ENCODE measurements at regions of chr10 and their contacts with region 1.

Region 1: DNA sequence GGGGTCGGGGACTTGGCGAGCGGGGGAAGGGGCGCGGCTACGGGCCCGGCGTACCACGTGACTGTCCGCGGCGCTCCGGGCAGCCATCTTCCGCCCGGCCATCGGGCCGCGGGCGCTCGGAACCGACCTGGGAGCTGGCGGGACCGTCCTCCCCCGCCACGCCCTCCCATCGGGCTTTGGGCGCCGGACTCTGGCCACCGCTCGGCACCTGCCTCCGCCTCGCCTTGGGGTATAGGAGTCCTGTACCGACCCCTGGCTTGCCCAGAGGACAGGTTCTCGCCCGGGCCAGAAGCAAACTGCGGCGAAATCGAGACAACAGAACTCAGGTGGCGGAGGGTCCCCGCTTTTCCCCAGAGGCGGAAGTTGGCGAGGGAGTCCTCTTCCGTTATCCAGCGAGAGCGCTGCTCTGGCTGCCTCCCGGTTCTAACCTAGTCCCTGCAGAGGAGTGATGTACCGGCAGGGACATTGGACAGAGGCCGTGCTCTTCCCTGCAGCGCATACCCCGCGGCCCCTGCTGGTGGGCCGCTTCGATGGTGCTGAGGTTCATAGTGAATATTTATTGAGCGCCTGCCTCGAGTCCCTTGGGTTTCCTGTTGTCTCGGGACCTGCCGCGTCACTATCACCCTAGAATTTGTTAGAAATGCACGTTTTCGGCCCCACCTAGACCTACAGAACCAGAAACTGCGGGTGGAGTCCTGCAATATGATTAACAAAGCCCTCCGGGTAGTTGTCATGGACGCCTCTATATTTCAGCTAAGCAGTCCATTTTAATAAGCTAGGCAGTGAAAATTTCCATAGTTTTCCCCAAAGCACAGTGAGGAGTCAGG is 1.3 kb upstream of the SGMS1 start:
- DNase-seq: peak; percentile 64
- ATAC-seq: peak; percentile 66
- H3K4me3 ChIP-seq: peak overlapping the region; percentile 63
- H3K27ac ChIP-seq: peak overlapping the region; percentile 97
- H3K4me1 ChIP-seq: no peaks in the 10 kb centered on the region
- H3K27me3 ChIP-seq: no peaks in the 10 kb centered on the region
- CTCF ChIP-seq: peak; percentile 68
- POLR2A ChIP-seq: 0 out of 2 replicates have a peak, but pooled peaks have one; percentile 16
- RAD21 ChIP-seq: peak; percentile 69

Region 2: GRCh38 chr10:50224330-50224952 is 400.6 kb before region 1 on chr10:
- CTCF ChIA-PET with region 1: no interaction called
- POLR2A ChIA-PET with region 1: no interaction called
- dilution Hi-C with region 1: no loop called
- in situ Hi-C with region 1: no loop called
- intact Hi-C with region 1: loop called (anchors 10 kb)
- DNase-seq: peak; percentile 74
- ATAC-seq: peak; percentile 88
- H3K4me3 ChIP-seq: no peak overlapping the region
- H3K27ac ChIP-seq: no peak overlapping the region
- H3K4me1 ChIP-seq: no peaks in the 10 kb centered on the region
- H3K27me3 ChIP-seq: peaks cover 14% of the 10 kb centered on the region
- CTCF ChIP-seq: peak; percentile 73
- POLR2A ChIP-seq: no peak
- RAD21 ChIP-seq: peak; percentile 85

Region 3: DNA sequence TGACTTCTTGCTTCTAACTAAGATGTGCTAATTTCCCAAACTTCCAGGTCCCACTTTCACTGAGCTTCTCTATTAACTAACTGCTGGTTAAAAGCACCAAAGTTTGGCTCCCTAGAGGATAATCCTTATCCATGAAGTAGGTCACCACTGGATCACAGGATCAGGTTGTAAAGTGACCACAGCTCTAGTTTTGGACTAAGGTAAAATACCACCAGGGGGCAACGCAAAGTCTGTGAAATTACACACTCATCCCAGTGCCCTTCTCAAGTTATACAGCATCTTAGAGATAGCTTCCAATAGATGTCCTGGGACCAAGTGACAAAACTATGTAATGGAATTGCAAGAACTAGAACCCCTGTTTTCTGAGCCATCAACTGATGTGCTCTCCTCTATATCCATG is 257.3 kb before region 1 on chr10:
- CTCF ChIA-PET with region 1: interaction called, 4 read pairs
- POLR2A ChIA-PET with region 1: no interaction called
- dilution Hi-C with region 1: no loop called
- in situ Hi-C with region 1: no loop called
- intact Hi-C with region 1: loop called (anchors 5 kb)
- DNase-seq: peak; percentile 54
- ATAC-seq: peak; percentile 61
- H3K4me3 ChIP-seq: no peak overlapping the region
- H3K27ac ChIP-seq: no peak overlapping the region
- H3K4me1 ChIP-seq: no peaks in the 10 kb centered on the region
- H3K27me3 ChIP-seq: no peaks in the 10 kb centered on the region
- CTCF ChIP-seq: peak; percentile 46
- POLR2A ChIP-seq: no peak
- RAD21 ChIP-seq: peak; percentile 54

Region 4: DNA sequence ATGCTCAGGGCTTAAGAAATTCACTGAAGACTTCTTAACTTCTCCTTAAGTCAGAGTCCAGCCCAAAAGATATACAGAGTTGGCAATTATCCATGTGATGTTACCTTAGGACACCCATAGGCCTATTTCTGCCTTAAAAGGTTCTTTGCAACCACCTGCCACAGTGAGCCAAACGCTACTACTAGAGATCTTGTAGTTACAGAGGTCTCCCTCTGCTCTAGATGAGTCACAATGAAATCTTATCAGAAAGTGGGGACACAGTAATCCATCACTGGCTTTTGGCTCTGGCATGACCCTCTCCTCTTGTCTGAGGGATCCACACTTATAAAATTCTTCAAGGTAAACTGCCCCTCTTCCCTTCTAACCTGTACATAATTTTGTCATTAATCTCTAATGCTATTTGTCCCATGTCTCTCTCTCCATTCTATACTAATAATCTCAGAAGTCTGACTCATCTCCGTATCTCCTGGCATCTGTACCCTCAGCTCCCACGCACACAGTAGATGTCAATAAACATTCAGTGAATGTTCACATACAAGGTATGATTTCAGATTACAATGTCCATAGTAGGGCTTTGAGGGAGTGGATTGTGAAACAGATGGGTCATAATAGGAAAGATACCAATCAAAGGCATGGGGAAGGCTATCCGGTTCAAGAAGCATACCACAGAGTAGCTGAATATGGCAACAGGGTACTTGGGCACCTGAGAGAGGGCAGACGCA is 113.4 kb before region 1 on chr10:
- CTCF ChIA-PET with region 1: no interaction called
- POLR2A ChIA-PET with region 1: no interaction called
- dilution Hi-C with region 1: no loop called
- in situ Hi-C with region 1: no loop called
- intact Hi-C with region 1: loop called (anchors 5 kb)
- DNase-seq: peak; percentile 80
- ATAC-seq: peak; percentile 48
- H3K4me3 ChIP-seq: no peak overlapping the region
- H3K27ac ChIP-seq: no peak overlapping the region
- H3K4me1 ChIP-seq: peaks cover 12% of the 10 kb centered on the region
- H3K27me3 ChIP-seq: no peaks in the 10 kb centered on the region
- CTCF ChIP-seq: no peak
- POLR2A ChIP-seq: no peak
- RAD21 ChIP-seq: no peak

Region 5: GRCh38 chr10:50561816-50562215 is 63.3 kb before region 1 on chr10:
- CTCF ChIA-PET with region 1: no interaction called
- POLR2A ChIA-PET with region 1: interaction called, 4 read pairs
- dilution Hi-C with region 1: no loop called
- in situ Hi-C with region 1: no loop called
- intact Hi-C with region 1: loop called (anchors 1 kb)
- DNase-seq: no peak
- ATAC-seq: peak; percentile 35
- H3K4me3 ChIP-seq: no peak overlapping the region
- H3K27ac ChIP-seq: peak overlapping the region; percentile 62; the same call in 1 of the 2 replicates
- H3K4me1 ChIP-seq: peaks cover 7% of the 10 kb centered on the region
- H3K27me3 ChIP-seq: no peaks in the 10 kb centered on the region
- CTCF ChIP-seq: peak; percentile 40
- POLR2A ChIP-seq: no peak
- RAD21 ChIP-seq: peak; percentile 50

Region 6: DNA sequence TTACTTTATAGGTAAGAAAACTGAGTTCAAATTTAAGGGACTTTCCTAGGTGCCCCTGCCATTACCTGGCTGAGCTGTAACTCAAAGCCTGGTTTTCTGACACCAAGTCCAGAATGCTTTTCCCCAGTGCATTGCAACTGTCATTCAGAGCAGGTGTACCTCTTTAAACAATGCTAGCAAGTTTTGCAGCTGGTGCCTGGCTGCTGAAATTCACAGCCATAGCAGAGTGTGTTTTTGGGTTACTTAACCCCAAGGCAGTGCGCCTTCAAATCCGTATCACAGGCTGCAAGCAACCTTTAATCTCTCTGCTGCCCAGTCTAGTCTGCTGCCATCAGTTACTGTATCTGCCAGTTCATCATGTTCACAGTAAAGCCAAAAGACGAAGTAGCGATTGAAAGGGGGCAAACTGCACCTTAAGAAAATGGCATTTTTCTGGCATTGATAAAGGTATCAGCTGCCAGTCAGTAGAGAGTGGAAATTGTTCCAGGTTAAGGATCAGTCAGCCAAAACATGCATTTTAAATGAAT is 808.9 kb after region 1 on chr10:
- CTCF ChIA-PET with region 1: no interaction called
- POLR2A ChIA-PET with region 1: no interaction called
- dilution Hi-C with region 1: no loop called
- in situ Hi-C with region 1: no loop called
- intact Hi-C with region 1: no loop called
- DNase-seq: no peak
- ATAC-seq: no peak
- H3K4me3 ChIP-seq: no peak overlapping the region
- H3K27ac ChIP-seq: no peak overlapping the region
- H3K4me1 ChIP-seq: no peaks in the 10 kb centered on the region
- H3K27me3 ChIP-seq: no peaks in the 10 kb centered on the region
- CTCF ChIP-seq: no peak
- POLR2A ChIP-seq: no peak
- RAD21 ChIP-seq: no peak

Measured in IMR-90 (cell line).